CD4-positive, alpha-beta T cell (primary cell): ENCODE measurements at regions of chr2 and their contacts with region 1.

Region 1: GRCh38 chr2:208254871-208255556 is at the start of gene IDH1:
- DNase-seq: peak; percentile 87 to 98 (median 92)
- ATAC-seq: peak; percentile 80
- H3K4me3 ChIP-seq: peak within 1 kb of the TSS; percentile 86
- H3K4me3 Mint-ChIP-seq: peak within 1 kb of the TSS; percentile 100
- H3K27ac ChIP-seq: peak within 1 kb of the TSS; percentile 37 to 53
- H3K27ac Mint-ChIP-seq: peak within 1 kb of the TSS; percentile 74
- H3K4me1 ChIP-seq: peaks cover 20% of the 10 kb centered on the region
- H3K4me1 Mint-ChIP-seq: peaks cover 25% of the 10 kb centered on the region
- H3K27me3 ChIP-seq: no peaks in the 10 kb centered on the region
- H3K27me3 Mint-ChIP-seq: no peaks in the 10 kb centered on the region
- CTCF ChIP-seq: no peak
- total RNA-seq, gene IDH1: 3.0 to 3.4 TPM

Region 2: GRCh38 chr2:206296128-206296527 is 1958.9 kb before region 1 on chr2:
- CTCF ChIA-PET with region 1: no interaction called
- POLR2A ChIA-PET with region 1: no interaction called
- intact Hi-C with region 1: no loop called
- DNase-seq: no peak
- ATAC-seq: no peak
- H3K4me3 ChIP-seq: no peak overlapping the region
- H3K4me3 Mint-ChIP-seq: no peak overlapping the region
- H3K27ac ChIP-seq: no peak overlapping the region
- H3K27ac Mint-ChIP-seq: no peak overlapping the region
- H3K4me1 ChIP-seq: no peaks in the 10 kb centered on the region
- H3K4me1 Mint-ChIP-seq: no peaks in the 10 kb centered on the region
- H3K27me3 ChIP-seq: no peaks in the 10 kb centered on the region
- H3K27me3 Mint-ChIP-seq: no peaks in the 10 kb centered on the region
- CTCF ChIP-seq: no peak

Region 3: GRCh38 chr2:206765242-206766056 is 1489.6 kb before region 1 on chr2 and contains the starts of genes FASTKD2 and MDH1B:
- CTCF ChIA-PET with region 1: no interaction called
- POLR2A ChIA-PET with region 1: no interaction called
- intact Hi-C with region 1: loop called in 1 of 2 experiments (anchors 5 kb)
- DNase-seq: peak; percentile 63 to 94 (median 74)
- ATAC-seq: peak; percentile 89
- H3K4me3 ChIP-seq: peak within 1 kb of the TSS; percentile 71
- H3K4me3 Mint-ChIP-seq: peak within 1 kb of the TSS; percentile 96
- H3K27ac ChIP-seq: peak within 1 kb of the TSS; percentile 80 to 85
- H3K27ac Mint-ChIP-seq: peak within 1 kb of the TSS; percentile 97
- H3K4me1 ChIP-seq: peaks cover 16% of the 10 kb centered on the region
- H3K4me1 Mint-ChIP-seq: peaks cover 46% of the 10 kb centered on the region
- H3K27me3 ChIP-seq: peaks cover 0 to 13% of the 10 kb centered on the region in 2 experiments
- H3K27me3 Mint-ChIP-seq: peaks cover 5% of the 10 kb centered on the region
- CTCF ChIP-seq: no peak
- total RNA-seq, gene FASTKD2: 24.9 to 25.7 TPM
- total RNA-seq, gene MDH1B: 0.25 to 0.31 TPM

Region 4: GRCh38 chr2:208025037-208025813 is 229.8 kb before region 1 on chr2 and contains the start of gene PLEKHM3:
- CTCF ChIA-PET with region 1: no interaction called
- POLR2A ChIA-PET with region 1: no interaction called
- intact Hi-C with region 1: loop called in 1 of 2 experiments (anchors 5 kb)
- DNase-seq: peak; percentile 39 to 83 (median 67)
- ATAC-seq: peak; percentile 74
- H3K4me3 ChIP-seq: peak within 1 kb of the TSS; percentile 82
- H3K4me3 Mint-ChIP-seq: peak within 1 kb of the TSS; percentile 89
- H3K27ac ChIP-seq: peak within 1 kb of the TSS; percentile 58 to 63
- H3K27ac Mint-ChIP-seq: peak within 1 kb of the TSS; percentile 92
- H3K4me1 ChIP-seq: peaks cover 10% of the 10 kb centered on the region
- H3K4me1 Mint-ChIP-seq: peaks cover 21% of the 10 kb centered on the region
- H3K27me3 ChIP-seq: no peaks in the 10 kb centered on the region
- H3K27me3 Mint-ChIP-seq: no peaks in the 10 kb centered on the region
- CTCF ChIP-seq: no peak
- total RNA-seq, gene PLEKHM3: 11.3 to 11.6 TPM

Region 5: GRCh38 chr2:208101716-208102631 is 153.0 kb before region 1 on chr2:
- CTCF ChIA-PET with region 1: no interaction called
- POLR2A ChIA-PET with region 1: interaction called, 4 read pairs
- intact Hi-C with region 1: loop called in 1 of 2 experiments (anchors 10 kb)
- DNase-seq: no peak
- ATAC-seq: no peak
- H3K4me3 ChIP-seq: no peak overlapping the region
- H3K4me3 Mint-ChIP-seq: peak overlapping the region; percentile 65
- H3K27ac ChIP-seq: no peak overlapping the region
- H3K27ac Mint-ChIP-seq: peak overlapping the region; percentile 68
- H3K4me1 ChIP-seq: no peaks in the 10 kb centered on the region
- H3K4me1 Mint-ChIP-seq: peaks cover 35% of the 10 kb centered on the region
- H3K27me3 ChIP-seq: no peaks in the 10 kb centered on the region
- H3K27me3 Mint-ChIP-seq: no peaks in the 10 kb centered on the region
- CTCF ChIP-seq: no peak

Region 6: GRCh38 chr2:208175069-208175839 is 79.8 kb before region 1 on chr2:
- CTCF ChIA-PET with region 1: no interaction called
- POLR2A ChIA-PET with region 1: no interaction called
- intact Hi-C with region 1: loop called in 1 of 2 experiments (anchors 5 kb)
- DNase-seq: peak; percentile 27 to 75 (median 46)
- ATAC-seq: peak; percentile 99
- H3K4me3 ChIP-seq: no peak overlapping the region
- H3K4me3 Mint-ChIP-seq: no peak overlapping the region
- H3K27ac ChIP-seq: no peak overlapping the region
- H3K27ac Mint-ChIP-seq: no peak overlapping the region
- H3K4me1 ChIP-seq: no peaks in the 10 kb centered on the region
- H3K4me1 Mint-ChIP-seq: peaks cover 5% of the 10 kb centered on the region
- H3K27me3 ChIP-seq: peaks cover 0 to 15% of the 10 kb centered on the region in 2 experiments
- H3K27me3 Mint-ChIP-seq: peaks cover 12% of the 10 kb centered on the region
- CTCF ChIP-seq: peak; percentile 86

Region 7: GRCh38 chr2:208265801-208266552 is 11.0 kb after region 1 on chr2 and contains the start of gene PIKFYVE:
- CTCF ChIA-PET with region 1: interaction called, 57 read pairs
- POLR2A ChIA-PET with region 1: interaction called, 51 read pairs
- intact Hi-C with region 1: loop called (anchors 1 kb)
- DNase-seq: peak; percentile 66 to 94 (median 83)
- ATAC-seq: peak; percentile 74
- H3K4me3 ChIP-seq: peak within 1 kb of the TSS; percentile 90
- H3K4me3 Mint-ChIP-seq: peak within 1 kb of the TSS; percentile 96
- H3K27ac ChIP-seq: peak within 1 kb of the TSS; percentile 54 to 83
- H3K27ac Mint-ChIP-seq: peak within 1 kb of the TSS; percentile 96
- H3K4me1 ChIP-seq: peaks cover 23% of the 10 kb centered on the region
- H3K4me1 Mint-ChIP-seq: peaks cover 55% of the 10 kb centered on the region
- H3K27me3 ChIP-seq: no peaks in the 10 kb centered on the region
- H3K27me3 Mint-ChIP-seq: no peaks in the 10 kb centered on the region
- CTCF ChIP-seq: no peak
- total RNA-seq, gene PIKFYVE: 29.3 to 29.9 TPM

Region 8: GRCh38 chr2:208929139-208929864 is 674.3 kb after region 1 on chr2:
- CTCF ChIA-PET with region 1: no interaction called
- POLR2A ChIA-PET with region 1: no interaction called
- intact Hi-C with region 1: no loop called
- DNase-seq: no peak
- ATAC-seq: no peak
- H3K4me3 ChIP-seq: no peak overlapping the region
- H3K4me3 Mint-ChIP-seq: no peak overlapping the region
- H3K27ac ChIP-seq: no peak overlapping the region
- H3K27ac Mint-ChIP-seq: no peak overlapping the region
- H3K4me1 ChIP-seq: no peaks in the 10 kb centered on the region
- H3K4me1 Mint-ChIP-seq: no peaks in the 10 kb centered on the region
- H3K27me3 ChIP-seq: no peaks in the 10 kb centered on the region
- H3K27me3 Mint-ChIP-seq: no peaks in the 10 kb centered on the region
- CTCF ChIP-seq: no peak

Region 9: GRCh38 chr2:210002158-210003157 is 1747.4 kb after region 1 on chr2 and contains the start of gene RPE:
- CTCF ChIA-PET with region 1: no interaction called
- POLR2A ChIA-PET with region 1: no interaction called
- intact Hi-C with region 1: loop called in 1 of 2 experiments (anchors 10 kb)
- DNase-seq: peak; percentile 94 to 100 (median 97)
- ATAC-seq: peak; percentile 98
- H3K4me3 ChIP-seq: peak within 1 kb of the TSS; percentile 88
- H3K4me3 Mint-ChIP-seq: peak within 1 kb of the TSS; percentile 90
- H3K27ac ChIP-seq: peak within 1 kb of the TSS; percentile 63 to 70
- H3K27ac Mint-ChIP-seq: peak within 1 kb of the TSS; percentile 88
- H3K4me1 ChIP-seq: peaks cover 23% of the 10 kb centered on the region
- H3K4me1 Mint-ChIP-seq: peaks cover 75% of the 10 kb centered on the region
- H3K27me3 ChIP-seq: no peaks in the 10 kb centered on the region
- H3K27me3 Mint-ChIP-seq: no peaks in the 10 kb centered on the region
- CTCF ChIP-seq: no peak
- total RNA-seq, gene RPE: 11.3 TPM